Calu3 (cell line): ENCODE measurements at regions of chr16 and their contacts with region 1.

Region 1: GRCh38 chr16:8912793-8913192 is 30.6 kb downstream of the LITAFD start:
- DNase-seq: no peak
- H3K4me3 Mint-ChIP-seq: no peak overlapping the region
- H3K27ac Mint-ChIP-seq: peak overlapping the region; percentile 43
- H3K4me1 Mint-ChIP-seq: peaks cover 57% of the 10 kb centered on the region
- H3K27me3 Mint-ChIP-seq: no peaks in the 10 kb centered on the region
- CTCF ChIP-seq: no peak

Region 2: DNA sequence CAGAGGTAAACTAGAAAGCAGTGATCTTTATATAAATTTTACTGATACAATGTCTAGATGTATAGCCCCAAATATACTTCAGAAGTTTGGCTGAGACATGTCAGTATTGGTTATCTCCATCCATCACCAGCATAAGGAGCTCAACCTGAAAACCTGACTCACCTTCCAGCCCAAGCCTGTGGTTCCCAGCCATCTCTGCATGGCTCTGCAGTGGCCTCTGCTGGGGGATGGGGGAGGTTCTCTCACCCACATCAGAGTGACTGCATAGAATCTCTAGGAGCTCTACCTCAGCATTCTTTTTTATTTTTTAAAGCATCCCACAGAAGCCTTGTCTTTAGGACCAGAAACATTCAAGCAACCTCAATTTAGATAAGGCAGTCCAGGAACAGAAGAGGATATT is 23.6 kb after region 1 on chr16:
- CTCF ChIA-PET with region 1: interaction called, 19 read pairs
- intact Hi-C with region 1: no loop called
- DNase-seq: peak; percentile 86
- H3K4me3 Mint-ChIP-seq: no peak overlapping the region
- H3K27ac Mint-ChIP-seq: no peak overlapping the region
- H3K4me1 Mint-ChIP-seq: peaks cover 50% of the 10 kb centered on the region
- H3K27me3 Mint-ChIP-seq: no peaks in the 10 kb centered on the region
- CTCF ChIP-seq: peak; percentile 60

Region 3: DNA sequence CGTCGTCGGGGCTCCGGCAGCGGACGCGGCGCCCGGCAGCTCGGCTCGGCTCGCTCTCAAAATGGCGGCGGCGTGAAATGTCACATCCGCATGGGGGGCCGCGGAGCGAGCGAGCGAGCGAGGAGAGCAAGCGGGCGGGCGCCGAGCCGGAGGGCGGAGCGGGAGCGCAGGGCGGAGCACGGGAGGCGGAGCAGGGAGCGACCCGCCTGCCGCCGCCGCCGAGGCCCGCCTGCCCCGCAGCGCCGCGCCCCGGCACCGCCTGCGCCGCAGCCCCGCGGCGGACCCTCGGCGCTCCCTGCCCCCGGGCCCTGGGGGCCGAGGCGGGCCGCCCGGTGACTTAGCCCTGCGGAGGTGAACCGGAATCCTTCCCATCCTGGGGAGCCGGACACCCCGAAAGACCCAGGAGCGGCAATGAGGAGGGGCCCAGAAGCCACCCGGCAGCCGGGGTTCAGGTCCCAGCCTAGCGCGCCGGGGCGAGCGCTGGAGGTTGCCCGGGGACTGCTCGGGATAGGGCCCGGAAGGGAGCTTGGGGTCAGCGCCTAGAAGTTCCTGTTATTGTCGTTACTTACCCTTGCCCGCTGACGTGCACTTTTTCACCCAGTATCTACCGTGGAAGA is 51.1 kb after region 1 on chr16 and contains the start of gene USP7:
- CTCF ChIA-PET with region 1: no interaction called
- intact Hi-C with region 1: loop called (anchors 5 kb)
- DNase-seq: peak; percentile 97
- H3K4me3 Mint-ChIP-seq: peak within 1 kb of the TSS; percentile 99
- H3K27ac Mint-ChIP-seq: peak within 1 kb of the TSS; percentile 86
- H3K4me1 Mint-ChIP-seq: peaks cover 34% of the 10 kb centered on the region
- H3K27me3 Mint-ChIP-seq: no peaks in the 10 kb centered on the region
- CTCF ChIP-seq: no peak
- total RNA-seq, gene USP7: 126 and 165 TPM in 2 replicates

Region 4: GRCh38 chr16:9165681-9166080 is 252.9 kb after region 1 on chr16:
- CTCF ChIA-PET with region 1: no interaction called
- intact Hi-C with region 1: no loop called
- DNase-seq: no peak
- H3K4me3 Mint-ChIP-seq: no peak overlapping the region
- H3K27ac Mint-ChIP-seq: no peak overlapping the region
- H3K4me1 Mint-ChIP-seq: no peaks in the 10 kb centered on the region
- H3K27me3 Mint-ChIP-seq: no peaks in the 10 kb centered on the region
- CTCF ChIP-seq: no peak